Transverse colon (tissue), 4 donors: ENCODE measurements at regions of chr2 and their contacts with region 1.

Region 1: GRCh38 chr2:177489719-177490301 is 97.2 kb downstream of the AGPS start:
- DNase-seq: no peak
- H3K4me3 ChIP-seq: no peak overlapping the region
- H3K27ac ChIP-seq: no peak overlapping the region
- H3K4me1 ChIP-seq: no peaks in the 10 kb centered on the region
- H3K27me3 ChIP-seq: no peaks in the 10 kb centered on the region
- CTCF ChIP-seq: peak; percentile 47 to 61 (median 53)
- EP300 ChIP-seq: no peak
- POLR2A ChIP-seq: no peak

Region 2: DNA sequence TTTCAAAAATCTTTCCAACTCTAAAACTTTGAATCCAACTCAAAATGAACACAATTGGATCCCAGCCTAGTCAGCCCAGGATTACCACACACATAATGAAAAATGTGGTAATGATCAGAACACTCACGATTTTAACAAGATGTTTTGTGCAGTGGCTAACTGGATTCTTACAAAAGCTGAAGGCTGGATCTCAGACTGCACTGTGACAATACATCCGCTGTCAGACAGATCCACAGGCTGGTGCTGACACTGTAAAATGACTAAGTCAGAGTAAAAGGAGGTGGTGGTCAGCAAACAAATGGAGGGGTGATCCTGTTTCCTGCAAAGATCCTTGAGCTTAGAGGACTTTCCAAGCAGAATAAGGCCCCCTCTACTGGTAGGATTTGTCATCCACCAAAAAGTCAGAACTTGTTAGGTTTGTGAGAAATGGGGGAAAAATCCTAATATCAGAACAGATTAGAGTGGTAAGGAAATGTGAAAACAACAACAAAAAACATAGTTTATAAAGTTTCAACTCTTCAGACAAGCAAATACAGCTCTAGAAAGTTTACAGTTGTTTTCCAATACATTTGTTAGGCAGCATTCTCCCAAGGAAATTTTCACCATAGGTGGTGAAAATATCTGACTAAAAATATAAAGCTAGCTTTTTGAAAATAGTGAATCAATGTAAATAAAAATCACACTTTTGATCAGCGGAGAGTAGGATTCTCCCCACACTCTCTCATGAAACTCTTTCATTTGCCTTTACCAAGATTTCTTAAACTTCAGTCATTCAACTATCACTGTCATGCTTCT is 114.7 kb after region 1 on chr2:
- in situ Hi-C with region 1: loop called in 1 of 4 experiments (anchors 10 kb)
- intact Hi-C with region 1: loop called (anchors 10 kb)
- DNase-seq: no peak
- H3K4me3 ChIP-seq: no peak overlapping the region
- H3K27ac ChIP-seq: peak overlapping the region; percentile 19 to 59 (median 40)
- H3K4me1 ChIP-seq: peaks cover 0 to 28% (median 3%) of the 10 kb centered on the region in 4 donors
- H3K27me3 ChIP-seq: no peaks in the 10 kb centered on the region
- CTCF ChIP-seq: peak; percentile 61 to 68 (median 64)
- EP300 ChIP-seq: no peak
- POLR2A ChIP-seq: no peak

Region 3: DNA sequence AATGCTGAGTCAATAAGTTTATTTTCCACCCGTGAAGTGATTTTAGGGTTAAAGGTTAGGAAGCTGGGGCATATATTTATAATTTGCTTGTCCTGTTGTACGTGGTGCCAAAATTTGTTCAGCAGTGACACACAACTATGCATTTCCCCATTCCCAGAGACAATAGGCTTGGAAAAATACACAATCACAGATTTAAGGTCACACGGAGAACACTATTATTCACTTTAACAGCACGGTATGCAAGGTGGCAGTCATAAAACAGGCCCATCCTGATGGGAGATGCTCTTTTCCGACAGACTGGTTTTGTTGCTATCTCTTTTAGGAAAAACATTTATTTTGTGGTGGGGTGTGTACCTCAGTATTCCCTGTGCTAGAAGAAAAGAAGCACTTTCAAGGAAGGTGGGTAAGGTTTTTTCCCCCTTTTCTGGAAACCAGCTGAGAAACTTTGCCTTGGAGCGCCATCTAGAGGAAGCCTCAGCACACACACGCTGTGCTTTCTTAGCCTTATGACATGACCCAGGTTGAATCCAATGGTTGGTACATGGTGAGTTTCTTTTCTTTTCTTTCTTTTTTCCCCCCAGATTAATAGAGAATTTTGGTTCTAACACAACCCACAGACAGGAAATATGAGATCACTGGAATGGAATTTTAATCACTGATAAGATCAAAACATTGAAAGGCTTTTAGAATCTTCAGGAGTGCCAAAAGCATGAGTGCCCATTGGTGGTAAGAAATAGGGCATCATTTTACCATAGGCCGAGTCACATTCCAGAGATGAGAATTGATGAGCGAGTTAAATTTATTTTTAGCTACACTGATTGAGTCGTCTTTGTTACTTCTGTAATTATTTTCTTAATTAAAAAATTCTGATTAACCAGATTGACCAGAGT is 234.8 kb after region 1 on chr2:
- in situ Hi-C with region 1: loop called in 1 of 4 experiments (anchors 25 kb)
- intact Hi-C with region 1: no loop called
- DNase-seq: peak; percentile 55
- H3K4me3 ChIP-seq: no peak overlapping the region
- H3K27ac ChIP-seq: no peak overlapping the region
- H3K4me1 ChIP-seq: peaks cover 0 to 4% (median 0%) of the 10 kb centered on the region in 4 donors
- H3K27me3 ChIP-seq: no peaks in the 10 kb centered on the region
- CTCF ChIP-seq: peak; percentile 85 to 89 (median 85)
- EP300 ChIP-seq: no peak
- POLR2A ChIP-seq: no peak